ENCODE measurements at regions of chr10 and their contacts with region 1.

Region 1: GRCh38 chr10:6401562-6402348 is 178.3 kb downstream of the PRKCQ start:
- DNase-seq: peak; percentile 71
- H3K4me3 Mint-ChIP-seq: peak overlapping the region; percentile 9
- H3K27ac Mint-ChIP-seq: peak overlapping the region; percentile 35
- H3K4me1 Mint-ChIP-seq: peaks cover 42% of the 10 kb centered on the region
- H3K27me3 Mint-ChIP-seq: peaks cover 3% of the 10 kb centered on the region

Region 2: DNA sequence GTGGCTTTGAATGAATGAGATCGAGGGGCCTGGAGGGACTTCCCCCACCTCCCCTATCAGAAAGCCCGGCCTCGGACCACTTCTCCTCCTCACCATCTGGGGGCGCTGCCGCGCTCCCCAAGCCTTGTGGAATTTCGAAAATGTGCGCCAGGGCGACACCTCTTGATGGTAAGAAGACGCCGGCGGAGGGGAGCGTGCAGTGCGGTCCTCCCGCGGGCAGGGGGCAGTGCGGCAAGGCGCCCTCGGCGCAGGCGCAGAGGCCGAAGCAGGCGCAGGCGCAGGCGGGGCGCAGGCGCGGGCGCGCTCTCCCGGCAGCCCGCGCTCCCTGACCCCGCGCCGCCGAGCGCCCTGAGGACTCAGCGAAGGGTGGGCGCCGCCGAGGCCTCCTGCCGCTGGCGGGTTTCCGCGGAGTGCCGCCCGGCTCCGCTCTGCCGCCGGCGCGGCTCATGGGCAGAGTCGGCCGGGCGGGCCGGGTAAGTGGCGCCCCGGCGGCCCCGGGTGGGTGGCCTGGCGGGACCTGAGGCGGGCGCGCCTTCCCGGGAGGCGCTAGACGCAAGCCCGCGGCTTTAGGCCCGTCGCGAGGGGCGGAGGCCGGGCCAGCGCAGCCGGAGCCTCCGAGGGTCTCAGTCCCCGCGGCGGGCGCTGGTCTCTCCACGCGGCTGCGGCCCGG is 312.9 kb before region 1 on chr10 and contains the start of gene RBM17:
- CTCF ChIA-PET with region 1: interaction called, 12 read pairs
- POLR2A ChIA-PET with region 1: interaction called, 6 read pairs
- intact Hi-C with region 1: loop called (anchors 5 kb)
- DNase-seq: peak; percentile 98
- H3K4me3 Mint-ChIP-seq: peak within 1 kb of the TSS; percentile 90
- H3K27ac Mint-ChIP-seq: peak within 1 kb of the TSS; percentile 83
- H3K4me1 Mint-ChIP-seq: peaks cover 71% of the 10 kb centered on the region
- H3K27me3 Mint-ChIP-seq: no peaks in the 10 kb centered on the region
- total RNA-seq, gene RBM17: 151 to 155 TPM

Region 3: DNA sequence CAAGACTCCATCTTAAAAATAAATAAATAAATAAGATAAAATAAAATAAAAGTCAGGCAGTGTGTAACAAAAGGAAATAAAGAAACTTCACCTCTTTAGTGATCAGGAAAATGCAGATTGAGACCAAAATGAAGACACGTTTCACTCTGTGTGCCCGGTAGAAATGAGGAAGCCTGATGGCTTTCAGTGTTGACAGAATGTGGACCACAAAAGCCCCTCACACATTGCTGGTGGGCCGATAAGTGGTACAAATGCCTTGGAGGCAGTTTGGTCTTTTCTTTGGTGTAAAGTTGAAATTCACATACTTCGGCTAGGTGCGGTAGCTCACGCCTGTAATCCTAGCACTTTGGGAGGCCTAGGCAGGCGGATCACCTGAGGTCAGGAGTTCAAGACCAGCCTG is 243.5 kb before region 1 on chr10:
- CTCF ChIA-PET with region 1: interaction called, 10 read pairs
- POLR2A ChIA-PET with region 1: interaction called, 4 read pairs
- intact Hi-C with region 1: no loop called
- DNase-seq: no peak
- H3K4me3 Mint-ChIP-seq: no peak overlapping the region
- H3K27ac Mint-ChIP-seq: no peak overlapping the region
- H3K4me1 Mint-ChIP-seq: peaks cover 29% of the 10 kb centered on the region
- H3K27me3 Mint-ChIP-seq: no peaks in the 10 kb centered on the region

Region 4: GRCh38 chr10:6269953-6270867 is 131.5 kb before region 1 on chr10:
- CTCF ChIA-PET with region 1: interaction called, 10 read pairs
- POLR2A ChIA-PET with region 1: interaction called, 3 read pairs
- intact Hi-C with region 1: loop called (anchors 1 kb)
- DNase-seq: peak; percentile 91
- H3K4me3 Mint-ChIP-seq: peak overlapping the region; percentile 35
- H3K27ac Mint-ChIP-seq: peak overlapping the region; percentile 97
- H3K4me1 Mint-ChIP-seq: peaks cover 63% of the 10 kb centered on the region
- H3K27me3 Mint-ChIP-seq: no peaks in the 10 kb centered on the region

Region 5: DNA sequence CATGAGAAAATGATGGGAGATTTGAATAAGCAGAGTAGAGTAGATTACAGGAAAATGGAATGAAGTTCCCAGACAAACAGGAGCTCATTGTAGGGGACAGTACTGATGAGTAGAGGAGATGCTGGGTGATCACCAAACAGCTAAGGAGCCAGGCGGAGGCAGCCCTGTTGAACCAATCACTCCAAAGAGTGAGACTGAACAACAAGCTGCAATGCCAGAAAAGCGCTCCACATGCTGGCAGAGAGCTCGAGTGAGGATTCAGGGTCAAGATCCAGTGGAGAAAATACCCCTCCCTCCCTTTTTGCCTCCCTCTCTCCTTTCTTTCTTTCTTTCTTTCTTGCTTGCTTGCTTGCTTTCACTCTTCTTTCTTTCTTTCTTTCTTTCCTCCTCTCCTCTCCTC is 65.7 kb before region 1 on chr10:
- CTCF ChIA-PET with region 1: interaction called, 16 read pairs
- POLR2A ChIA-PET with region 1: no interaction called
- intact Hi-C with region 1: no loop called
- DNase-seq: no peak
- H3K4me3 Mint-ChIP-seq: no peak overlapping the region
- H3K27ac Mint-ChIP-seq: no peak overlapping the region
- H3K4me1 Mint-ChIP-seq: no peaks in the 10 kb centered on the region
- H3K27me3 Mint-ChIP-seq: no peaks in the 10 kb centered on the region

Region 6: DNA sequence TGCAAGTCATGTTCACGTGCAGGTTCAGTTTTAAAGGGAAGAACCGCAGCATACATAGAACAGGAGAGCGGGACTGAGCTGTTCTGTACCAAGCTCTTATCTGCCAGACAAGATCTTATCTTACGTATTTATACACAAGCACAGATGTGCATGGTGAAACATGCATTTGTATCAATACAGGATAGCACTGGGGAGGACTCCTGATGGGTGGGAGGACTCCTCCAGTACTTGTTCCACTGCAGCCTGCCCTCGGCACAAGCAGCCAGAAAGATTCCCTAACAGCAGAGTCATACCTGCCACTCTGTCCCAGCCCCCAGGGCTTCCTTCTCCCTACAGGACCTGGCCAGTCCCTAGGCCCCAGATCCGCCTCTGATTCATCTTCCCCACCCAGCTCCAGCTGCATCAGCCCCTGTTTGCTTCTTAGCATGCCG is 191.5 kb after region 1 on chr10:
- CTCF ChIA-PET with region 1: interaction called, 11 read pairs
- POLR2A ChIA-PET with region 1: no interaction called
- intact Hi-C with region 1: no loop called
- DNase-seq: peak; percentile 44
- H3K4me3 Mint-ChIP-seq: peak overlapping the region; percentile 14
- H3K27ac Mint-ChIP-seq: peak overlapping the region; percentile 72
- H3K4me1 Mint-ChIP-seq: peaks cover 90% of the 10 kb centered on the region
- H3K27me3 Mint-ChIP-seq: no peaks in the 10 kb centered on the region

Region 7: DNA sequence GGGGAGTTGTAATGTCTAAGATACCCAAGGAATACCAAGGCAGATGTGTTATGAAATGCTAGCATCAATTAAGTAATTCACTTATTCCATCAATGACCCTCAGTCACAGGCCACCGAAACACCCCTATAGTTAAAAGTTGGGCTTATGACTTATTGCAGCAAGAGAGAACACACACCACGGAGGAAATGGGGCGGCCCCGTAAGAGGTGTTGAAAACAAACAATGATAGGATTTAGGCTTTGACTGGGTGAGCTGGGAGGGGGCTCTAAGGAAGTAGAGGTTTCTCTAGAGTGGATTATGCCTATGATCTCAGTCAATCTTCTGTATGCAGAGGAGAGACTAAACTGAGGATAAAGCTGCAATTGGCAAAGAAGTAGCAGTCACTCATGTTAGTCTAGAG is 223.7 kb after region 1 on chr10:
- CTCF ChIA-PET with region 1: no interaction called
- POLR2A ChIA-PET with region 1: no interaction called
- intact Hi-C with region 1: no loop called
- DNase-seq: peak; percentile 37
- H3K4me3 Mint-ChIP-seq: no peak overlapping the region
- H3K27ac Mint-ChIP-seq: no peak overlapping the region
- H3K4me1 Mint-ChIP-seq: peaks cover 22% of the 10 kb centered on the region
- H3K27me3 Mint-ChIP-seq: no peaks in the 10 kb centered on the region

Measured in activated CD4-positive, alpha-beta memory T cell treated with anti-CD3 and anti-CD28 coated beads for 36 hours (primary cell).